ENCODE measurements at regions of chr1 and their contacts with region 1.

Region 1: GRCh38 chr1:46442317-46443161 is 47.1 kb upstream of the DMBX1 start:
- DNase-seq: peak; percentile 5
- H3K4me3 ChIP-seq: peak overlapping the region; percentile 54
- CTCF ChIP-seq: peak; percentile 96

Region 2: DNA sequence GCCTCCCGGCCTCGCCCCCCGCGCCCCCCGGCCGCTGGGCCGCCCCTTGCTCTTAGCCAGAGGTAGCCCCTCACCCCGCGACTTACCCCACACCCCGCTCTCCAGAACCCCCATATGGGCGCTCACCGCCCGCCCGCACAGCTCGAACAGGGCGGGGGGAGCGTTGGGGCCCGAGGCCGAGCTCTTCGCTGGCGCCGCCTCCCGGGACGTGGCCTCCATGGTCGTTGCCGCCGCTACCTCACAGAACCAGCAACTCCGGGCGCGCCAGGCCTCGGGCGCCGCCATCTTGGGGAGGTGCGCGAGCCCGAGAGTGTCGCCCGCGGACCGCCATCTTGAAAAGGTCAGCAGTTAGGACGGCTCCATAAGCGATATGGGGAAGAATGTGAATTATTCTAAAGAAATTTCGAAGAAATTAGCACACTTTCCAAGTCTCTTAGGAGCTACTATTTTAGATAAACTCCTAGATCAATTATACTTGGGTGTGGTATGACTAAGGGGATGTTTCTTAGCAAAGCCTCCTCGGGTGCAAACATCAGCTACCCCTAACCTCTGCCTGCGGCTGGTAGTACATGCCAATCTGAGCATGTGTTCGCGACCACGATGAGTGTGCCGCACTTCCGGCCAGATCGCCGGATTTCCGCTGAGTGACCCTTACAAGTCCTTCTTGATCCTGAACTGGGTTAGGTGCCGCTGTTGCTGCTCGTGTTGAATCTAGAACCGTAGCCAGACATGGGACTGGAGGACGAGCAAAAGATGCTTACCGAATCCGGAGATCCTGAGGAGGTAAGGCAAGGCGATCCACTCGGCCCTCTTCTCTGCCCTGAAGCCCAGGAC is 139.3 kb before region 1 on chr1 and contains the starts of genes LRRC41 and UQCRH:
- CTCF ChIA-PET with region 1: no interaction called
- POLR2A ChIA-PET with region 1: no interaction called
- DNase-seq: peak; percentile 89
- H3K4me3 ChIP-seq: peak within 1 kb of the TSS; percentile 78
- CTCF ChIP-seq: peak; percentile 2

Region 3: DNA sequence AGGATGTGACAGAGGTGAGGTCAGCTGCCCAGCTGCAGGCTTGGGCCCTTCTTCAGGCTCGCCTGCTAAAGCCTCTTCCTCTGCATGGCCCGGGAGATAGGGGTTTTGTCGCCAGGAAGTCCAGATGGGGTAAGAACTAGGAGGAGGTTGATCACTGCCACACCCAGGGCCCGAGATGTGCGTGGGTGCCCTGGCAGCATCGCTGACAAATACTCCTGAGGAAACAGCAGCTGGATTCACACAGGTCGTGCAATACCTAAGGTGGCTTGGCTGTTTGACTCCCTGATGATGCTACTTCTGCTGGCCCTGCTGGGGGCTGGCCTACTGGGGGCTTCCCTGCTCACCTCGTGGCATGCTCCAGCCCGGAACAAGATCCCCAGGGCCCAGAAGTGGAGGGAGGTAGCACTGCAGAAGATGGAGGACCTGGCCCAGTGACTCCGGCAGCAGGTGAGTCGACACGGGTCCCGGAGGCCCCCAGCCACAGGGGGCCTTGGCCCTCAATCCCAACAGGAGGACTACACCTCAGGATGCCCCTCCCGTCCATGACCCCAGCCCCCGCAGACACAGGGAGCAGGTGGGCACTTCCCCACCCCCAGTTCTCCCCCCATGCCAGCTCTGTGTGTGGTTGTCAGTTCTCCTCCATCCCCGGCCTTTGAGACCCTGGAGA is 18.8 kb before region 1 on chr1:
- CTCF ChIA-PET with region 1: interaction called, 13 read pairs
- POLR2A ChIA-PET with region 1: no interaction called
- DNase-seq: no peak
- H3K4me3 ChIP-seq: no peak overlapping the region
- CTCF ChIP-seq: no peak

Region 4: DNA sequence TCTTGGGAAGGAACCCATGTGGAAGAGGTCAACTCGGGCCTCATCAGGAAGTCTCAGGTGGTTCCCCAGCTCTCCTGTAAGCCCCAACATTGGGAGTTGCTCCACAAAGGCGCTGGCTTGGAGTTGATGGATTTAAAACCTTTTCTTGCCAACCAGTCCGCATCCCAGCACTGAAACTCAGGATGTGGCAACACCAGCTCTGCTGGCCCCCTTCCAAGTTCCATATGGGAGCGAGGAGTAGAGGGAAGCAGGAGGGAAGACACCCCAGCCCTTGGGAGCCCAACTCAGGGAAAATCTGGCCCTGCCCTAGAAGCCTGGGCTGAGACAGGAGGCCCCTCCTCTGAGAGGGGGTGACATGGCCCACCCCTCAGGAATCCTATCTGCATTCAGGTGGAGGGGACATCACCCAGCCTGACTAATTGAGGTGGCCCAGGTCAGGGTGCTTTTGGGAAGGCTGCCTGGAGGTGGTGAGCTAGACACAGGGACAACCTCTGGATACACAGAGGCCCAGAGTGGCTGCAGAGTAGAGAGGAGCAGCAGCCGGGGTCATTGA is 13.9 kb after region 1 on chr1:
- CTCF ChIA-PET with region 1: interaction called, 47 read pairs
- POLR2A ChIA-PET with region 1: no interaction called
- DNase-seq: no peak
- H3K4me3 ChIP-seq: no peak overlapping the region
- CTCF ChIP-seq: no peak

Region 5: GRCh38 chr1:46477153-46477929 is 34.8 kb after region 1 on chr1:
- CTCF ChIA-PET with region 1: interaction called, 38 read pairs
- POLR2A ChIA-PET with region 1: no interaction called
- DNase-seq: no peak
- H3K4me3 ChIP-seq: no peak overlapping the region
- CTCF ChIP-seq: peak; percentile 94

Region 6: DNA sequence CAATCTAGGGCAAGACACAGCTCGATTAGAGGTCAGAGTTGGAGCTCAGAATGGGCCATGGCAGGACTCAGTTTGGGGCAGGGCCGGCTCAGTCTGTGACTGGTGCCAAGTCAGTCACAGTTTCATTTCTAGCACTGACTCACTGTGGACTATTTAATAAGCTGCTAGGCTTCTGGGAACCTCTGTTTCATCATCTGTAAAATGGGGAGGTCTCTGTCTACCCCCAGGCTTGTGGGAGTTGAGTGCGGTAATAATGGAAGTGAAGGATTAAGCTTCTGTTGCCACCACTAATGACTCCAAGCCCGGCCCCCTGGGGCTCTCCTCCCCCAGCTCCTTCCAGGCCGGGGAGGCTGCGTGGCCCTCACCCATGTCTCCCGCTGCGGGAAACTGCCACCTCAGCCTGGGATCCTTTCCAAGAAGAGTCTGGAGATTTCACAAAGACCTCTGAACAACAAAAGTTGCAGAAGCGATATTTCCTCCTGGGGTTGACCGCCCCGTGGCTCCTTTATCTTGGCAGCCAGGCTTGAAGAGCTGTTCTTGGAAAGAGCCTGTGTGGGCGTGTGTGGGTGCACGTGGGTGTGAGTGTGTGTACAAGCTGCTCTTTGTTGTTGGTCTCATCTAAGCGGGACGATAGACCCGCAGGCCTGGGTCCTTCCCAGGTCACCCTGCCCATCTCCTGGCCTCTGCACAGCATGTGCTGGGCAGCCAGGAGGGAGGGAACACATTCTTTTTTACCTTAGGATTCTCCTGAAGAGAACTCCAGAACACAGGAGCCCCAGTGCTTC is 79.8 kb after region 1 on chr1:
- CTCF ChIA-PET with region 1: interaction called, 429 read pairs
- POLR2A ChIA-PET with region 1: no interaction called
- DNase-seq: no peak
- H3K4me3 ChIP-seq: no peak overlapping the region
- CTCF ChIP-seq: no peak

Region 7: GRCh38 chr1:46539972-46540371 is 97.4 kb after region 1 on chr1:
- CTCF ChIA-PET with region 1: interaction called, 429 read pairs
- POLR2A ChIA-PET with region 1: no interaction called
- DNase-seq: no peak
- H3K4me3 ChIP-seq: no peak overlapping the region
- CTCF ChIP-seq: no peak

Region 8: GRCh38 chr1:46724991-46725735 is 282.6 kb after region 1 on chr1:
- CTCF ChIA-PET with region 1: interaction called, 41 read pairs
- POLR2A ChIA-PET with region 1: no interaction called
- DNase-seq: peak; percentile 41
- H3K4me3 ChIP-seq: no peak overlapping the region
- CTCF ChIP-seq: peak; percentile 87